Activated CD8-positive, alpha-beta T cell treated with anti-CD3 and anti-CD28 coated beads, Interleukin-2, amount 10 ng/mL, durations not matched to agents 7 days and 5 days (primary cell): ENCODE measurements at regions of chr19 and their contacts with region 1.

Region 1: DNA sequence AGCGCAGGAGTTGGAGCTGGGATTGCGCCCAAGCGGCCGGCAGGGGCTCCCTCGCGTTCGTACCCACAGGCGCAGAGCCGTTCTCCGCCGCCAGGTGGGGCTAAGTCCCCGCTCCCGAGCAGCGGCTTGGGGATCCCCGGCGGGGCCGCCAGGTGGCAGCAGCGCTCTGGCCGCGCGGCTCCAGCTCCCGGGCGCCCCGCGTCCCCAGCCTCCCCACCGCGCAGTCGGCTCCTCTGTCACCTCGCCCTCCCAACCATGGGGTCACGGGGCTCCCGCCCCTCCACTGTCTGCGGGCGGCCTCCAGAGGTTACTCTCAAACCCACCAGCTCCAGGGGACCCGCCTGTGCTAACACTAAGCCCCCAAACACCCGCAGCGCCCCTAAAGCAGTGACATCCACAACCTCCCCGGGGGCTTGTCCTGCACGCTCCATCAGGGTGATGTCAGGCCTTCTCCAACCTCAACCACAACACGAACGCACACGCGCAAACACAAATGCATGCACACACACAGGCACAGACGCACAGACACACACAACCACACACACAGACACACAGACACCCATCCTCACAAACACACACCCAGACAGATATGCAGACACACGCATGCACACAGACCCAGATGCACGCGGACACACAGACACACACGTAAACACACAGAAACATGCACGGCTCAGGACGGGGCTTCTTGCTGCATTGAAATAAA is 18.4 kb upstream of the KCTD15 start:
- DNase-seq: peak; percentile 87
- ATAC-seq: peak; percentile 92
- H3K4me3 Mint-ChIP-seq: no peak overlapping the region
- H3K27ac Mint-ChIP-seq: no peak overlapping the region
- H3K4me1 Mint-ChIP-seq: peaks cover 6% of the 10 kb centered on the region
- H3K27me3 Mint-ChIP-seq: peaks cover 12% of the 10 kb centered on the region

Region 2: GRCh38 chr19:33795370-33796163 is 17.3 kb after region 1 on chr19:
- CTCF ChIA-PET with region 1: interaction called, 11 read pairs
- POLR2A ChIA-PET with region 1: no interaction called
- DNase-seq: peak; percentile 32
- ATAC-seq: peak; percentile 63
- H3K4me3 Mint-ChIP-seq: peak overlapping the region; percentile 49
- H3K27ac Mint-ChIP-seq: no peak overlapping the region
- H3K4me1 Mint-ChIP-seq: peaks cover 2% of the 10 kb centered on the region
- H3K27me3 Mint-ChIP-seq: peaks cover 33% of the 10 kb centered on the region

Region 3: DNA sequence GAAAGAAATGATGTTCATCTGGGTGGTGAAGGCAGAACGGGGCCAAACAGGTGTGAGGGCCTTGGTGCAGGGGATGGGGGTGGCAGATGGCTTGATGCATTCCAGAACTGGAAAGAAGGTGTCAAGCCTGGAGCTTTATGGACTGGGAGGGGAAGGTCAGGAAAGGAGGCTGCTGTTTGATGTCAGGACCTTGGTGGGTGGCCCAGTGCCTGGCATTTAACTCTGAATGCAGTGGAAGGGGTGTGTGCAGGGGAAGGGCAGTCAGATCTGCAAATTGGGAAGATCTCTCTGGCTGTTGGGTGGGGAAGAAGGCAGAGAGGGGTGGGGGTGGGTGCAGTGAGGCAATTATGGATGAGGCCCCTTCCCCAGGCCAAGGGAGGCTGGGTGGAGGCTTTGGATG is 30.2 kb after region 1 on chr19:
- CTCF ChIA-PET with region 1: no interaction called
- POLR2A ChIA-PET with region 1: no interaction called
- DNase-seq: no peak
- ATAC-seq: no peak
- H3K4me3 Mint-ChIP-seq: no peak overlapping the region
- H3K27ac Mint-ChIP-seq: no peak overlapping the region
- H3K4me1 Mint-ChIP-seq: no peaks in the 10 kb centered on the region
- H3K27me3 Mint-ChIP-seq: no peaks in the 10 kb centered on the region

Region 4: DNA sequence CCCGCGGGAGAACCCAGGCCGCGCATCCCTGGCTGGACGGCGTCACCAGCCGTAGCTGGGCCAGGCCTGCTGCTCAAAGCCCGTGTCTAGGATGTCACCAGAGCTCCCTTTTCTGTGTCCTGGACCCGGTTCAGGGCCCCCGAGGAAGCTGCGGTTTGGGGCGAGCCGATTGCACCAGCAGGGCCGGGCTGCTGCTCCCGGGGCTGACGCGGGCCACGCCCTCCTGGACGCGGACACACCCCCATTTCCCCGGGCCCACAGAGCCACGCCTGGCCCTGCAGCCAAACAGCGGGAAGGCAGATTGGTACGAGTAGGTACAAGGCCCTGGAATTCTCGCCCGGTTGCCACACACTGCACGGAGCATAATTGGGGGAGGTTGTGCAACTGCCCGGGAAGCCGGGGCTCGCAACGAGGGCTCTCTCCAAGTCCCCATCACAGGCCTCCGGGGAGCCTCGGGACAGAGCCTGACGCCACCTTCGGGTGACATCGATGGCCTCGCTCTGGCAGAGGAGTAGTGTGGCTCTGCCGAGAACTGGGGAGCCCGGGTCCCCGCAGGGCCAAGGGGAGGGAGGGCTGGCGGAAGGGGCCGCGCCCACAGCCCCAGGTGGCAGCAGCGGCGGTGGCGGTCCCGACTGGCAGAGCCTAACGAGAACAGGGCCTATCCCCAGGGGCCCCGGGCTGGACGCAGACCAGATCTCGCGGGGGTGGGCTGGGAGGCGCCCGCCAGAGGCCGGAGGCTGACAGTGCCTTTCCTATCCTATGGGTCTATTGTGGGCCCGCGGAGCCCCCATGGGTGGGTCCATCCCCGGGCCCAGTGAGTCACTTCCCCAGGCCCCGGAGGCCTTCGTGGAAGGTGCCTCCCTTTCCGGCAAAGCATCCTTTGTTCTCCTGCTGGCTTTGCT is 41.9 kb after region 1 on chr19:
- CTCF ChIA-PET with region 1: interaction called, 19 read pairs
- POLR2A ChIA-PET with region 1: no interaction called
- DNase-seq: peak; percentile 76
- ATAC-seq: peak; percentile 81
- H3K4me3 Mint-ChIP-seq: peak overlapping the region; percentile 70
- H3K27ac Mint-ChIP-seq: peak overlapping the region; percentile 57
- H3K4me1 Mint-ChIP-seq: peaks cover 27% of the 10 kb centered on the region
- H3K27me3 Mint-ChIP-seq: peaks cover 18% of the 10 kb centered on the region

Region 5: DNA sequence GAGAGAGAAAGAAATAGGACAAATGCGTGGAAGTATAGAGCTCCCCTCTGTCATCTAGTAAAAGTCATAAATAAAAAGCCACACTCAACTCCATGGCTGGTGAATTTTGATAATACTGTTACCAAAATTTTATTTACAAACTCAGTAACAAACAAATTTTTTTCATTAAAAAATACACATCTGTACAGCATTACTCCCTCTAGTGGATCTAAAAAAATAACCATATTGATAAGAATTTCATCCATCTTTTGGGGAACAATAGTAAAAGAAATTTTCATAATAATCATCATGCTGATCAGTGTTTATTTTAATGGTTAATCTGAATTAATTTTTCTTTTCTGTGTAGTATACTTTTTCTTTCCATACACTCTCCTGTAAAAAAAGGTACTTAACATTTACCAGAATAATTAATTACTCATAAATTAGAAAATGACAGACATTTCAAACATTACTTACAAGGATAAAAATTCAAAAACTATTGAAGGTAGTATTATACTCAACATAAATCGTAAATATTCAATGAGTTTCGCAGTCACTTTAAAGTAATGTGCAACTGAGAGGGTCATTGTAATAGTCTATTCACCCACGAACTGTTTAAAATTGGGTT is 220.6 kb after region 1 on chr19:
- CTCF ChIA-PET with region 1: interaction called, 24 read pairs
- POLR2A ChIA-PET with region 1: no interaction called
- DNase-seq: no peak
- ATAC-seq: no peak
- H3K4me3 Mint-ChIP-seq: no peak overlapping the region
- H3K27ac Mint-ChIP-seq: no peak overlapping the region
- H3K4me1 Mint-ChIP-seq: no peaks in the 10 kb centered on the region
- H3K27me3 Mint-ChIP-seq: peaks cover 11% of the 10 kb centered on the region

Region 6: GRCh38 chr19:34096020-34096915 is 318.0 kb after region 1 on chr19:
- CTCF ChIA-PET with region 1: interaction called, 37 read pairs
- POLR2A ChIA-PET with region 1: no interaction called
- DNase-seq: no peak
- ATAC-seq: no peak
- H3K4me3 Mint-ChIP-seq: no peak overlapping the region
- H3K27ac Mint-ChIP-seq: no peak overlapping the region
- H3K4me1 Mint-ChIP-seq: no peaks in the 10 kb centered on the region
- H3K27me3 Mint-ChIP-seq: peaks cover 18% of the 10 kb centered on the region